ENCODE measurements at regions of chr9 and their contacts with region 1.

Region 1: DNA sequence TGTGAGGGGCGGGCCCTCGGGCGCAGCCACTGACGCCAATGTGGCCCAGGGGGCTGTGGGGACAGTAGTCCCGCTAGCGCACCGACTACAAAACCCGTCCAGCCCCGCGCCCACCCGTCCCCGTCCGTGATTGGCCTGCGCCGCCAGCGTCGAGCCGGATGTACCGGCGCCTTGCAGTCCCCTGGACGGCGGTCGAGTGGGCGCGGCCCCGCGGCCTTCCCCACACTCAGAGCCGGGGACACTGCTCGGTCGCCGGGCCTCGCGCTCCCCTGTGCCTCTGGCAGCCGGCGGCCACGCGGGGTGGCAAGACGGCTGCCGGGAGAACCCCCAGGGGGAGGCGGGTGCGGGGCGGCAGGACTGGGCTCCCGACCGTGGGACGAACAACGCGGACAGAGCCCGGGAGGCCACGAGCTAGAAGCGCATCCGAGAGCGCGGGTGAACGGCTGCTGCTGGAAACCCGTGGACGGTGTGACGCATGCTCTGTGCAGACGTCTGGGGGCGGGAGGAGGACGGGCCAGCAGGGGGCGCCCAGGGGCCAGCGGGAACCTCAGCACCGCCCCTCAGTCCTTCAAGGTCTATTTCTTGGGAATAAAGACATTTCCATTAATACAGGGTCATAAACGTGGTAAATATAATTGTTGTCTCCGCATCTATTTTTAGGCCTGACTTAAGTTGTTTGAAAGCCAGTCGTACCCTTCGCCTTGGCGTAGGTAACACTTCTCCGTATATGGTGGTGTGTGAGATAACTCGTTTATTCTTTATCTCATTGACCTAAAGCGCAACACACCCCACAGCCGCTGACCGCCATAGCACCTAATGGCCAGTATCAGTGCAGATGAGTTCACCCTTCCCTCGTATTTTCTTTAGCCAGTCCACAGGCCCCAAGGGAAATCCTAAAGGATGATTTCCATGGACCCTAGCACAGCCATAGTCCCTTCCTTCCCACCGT is 629 bp upstream of the BICD2 start:
- DNase-seq: peak; percentile 88 to 99 (median 97)
- ATAC-seq: peak; percentile 89
- H3K4me3 ChIP-seq: peak overlapping the region; percentile 95
- H3K4me3 Mint-ChIP-seq: peak overlapping the region; percentile 95
- H3K27ac ChIP-seq: peak overlapping the region; percentile 97
- H3K27ac Mint-ChIP-seq: peak overlapping the region; percentile 100
- H3K4me1 ChIP-seq: peaks cover 51% of the 10 kb centered on the region
- H3K4me1 Mint-ChIP-seq: peaks cover 62% of the 10 kb centered on the region
- H3K27me3 ChIP-seq: no peaks in the 10 kb centered on the region
- H3K27me3 Mint-ChIP-seq: no peaks in the 10 kb centered on the region
- CTCF ChIP-seq: peak; percentile 97

Region 2: GRCh38 chr9:92115071-92115858 is 650.0 kb before region 1 on chr9 and contains the start of gene SPTLC1:
- CTCF ChIA-PET with region 1: no interaction called
- POLR2A ChIA-PET with region 1: no interaction called
- intact Hi-C with region 1: loop called (anchors 1 to 10 kb)
- DNase-seq: peak; percentile 90 to 98 (median 92)
- ATAC-seq: peak; percentile 94
- H3K4me3 ChIP-seq: peak within 1 kb of the TSS; percentile 71
- H3K4me3 Mint-ChIP-seq: peak within 1 kb of the TSS; percentile 94
- H3K27ac ChIP-seq: peak within 1 kb of the TSS; percentile 84 to 89
- H3K27ac Mint-ChIP-seq: peak within 1 kb of the TSS; percentile 97
- H3K4me1 ChIP-seq: peaks cover 9% of the 10 kb centered on the region
- H3K4me1 Mint-ChIP-seq: peaks cover 47% of the 10 kb centered on the region
- H3K27me3 ChIP-seq: no peaks in the 10 kb centered on the region
- H3K27me3 Mint-ChIP-seq: no peaks in the 10 kb centered on the region
- CTCF ChIP-seq: no peak
- total RNA-seq, gene SPTLC1: 40.9 to 43.0 TPM

Region 3: DNA sequence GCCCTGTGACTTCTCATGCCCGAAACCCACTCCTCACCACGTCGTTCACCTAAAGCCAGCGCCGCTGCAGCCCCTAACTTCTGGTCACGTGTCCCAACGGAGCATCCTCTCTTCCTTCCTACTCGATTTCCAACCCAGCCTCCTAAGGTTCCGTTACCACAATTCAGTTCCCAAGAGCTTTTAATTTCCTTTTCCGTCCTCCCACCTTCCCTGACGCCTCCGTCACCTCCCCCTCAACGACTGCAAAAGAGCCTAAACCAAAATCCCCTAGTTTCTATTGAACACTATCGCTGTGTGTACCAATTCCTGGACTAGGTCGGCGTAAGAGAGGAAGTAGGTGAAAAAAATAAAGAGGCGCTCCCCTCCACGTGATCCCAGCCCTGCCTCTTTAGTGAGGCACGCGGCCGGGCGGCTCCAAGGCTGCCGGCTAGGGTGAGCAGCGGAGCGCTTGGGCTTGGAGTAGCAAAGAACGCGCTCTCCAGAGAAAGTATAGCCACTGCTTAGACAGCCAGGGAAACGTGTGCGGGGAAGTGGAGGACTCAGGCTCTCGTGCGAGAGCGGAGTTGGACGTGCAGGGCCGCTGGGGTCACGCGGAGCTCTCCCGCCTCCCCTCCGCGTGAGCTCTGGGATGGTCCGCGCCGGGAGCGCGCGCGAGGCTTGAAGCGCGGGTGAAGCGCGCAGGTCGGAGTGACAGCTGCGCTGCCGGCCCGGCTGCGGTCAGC is 439.8 kb before region 1 on chr9 and contains the starts of genes CENPP and NOL8:
- CTCF ChIA-PET with region 1: no interaction called
- POLR2A ChIA-PET with region 1: interaction called, 4 read pairs
- intact Hi-C with region 1: loop called in 1 of 2 experiments (anchors 5 kb)
- DNase-seq: peak; percentile 68 to 93 (median 76)
- ATAC-seq: peak; percentile 94
- H3K4me3 ChIP-seq: peak within 1 kb of the TSS; percentile 69
- H3K4me3 Mint-ChIP-seq: peak within 1 kb of the TSS; percentile 96
- H3K27ac ChIP-seq: peak within 1 kb of the TSS; percentile 94 to 97
- H3K27ac Mint-ChIP-seq: peak within 1 kb of the TSS; percentile 94
- H3K4me1 ChIP-seq: peaks cover 13% of the 10 kb centered on the region
- H3K4me1 Mint-ChIP-seq: peaks cover 40% of the 10 kb centered on the region
- H3K27me3 ChIP-seq: no peaks in the 10 kb centered on the region
- H3K27me3 Mint-ChIP-seq: no peaks in the 10 kb centered on the region
- CTCF ChIP-seq: no peak
- total RNA-seq, gene CENPP: 4.8 TPM
- total RNA-seq, gene NOL8: 55.9 to 65.7 TPM

Region 4: GRCh38 chr9:92716557-92716956 is 48.7 kb before region 1 on chr9:
- CTCF ChIA-PET with region 1: no interaction called
- POLR2A ChIA-PET with region 1: interaction called, 3 read pairs
- intact Hi-C with region 1: loop called in 1 of 2 experiments (anchors 2 kb)
- DNase-seq: peak; percentile 70 to 90 (median 82)
- ATAC-seq: peak; percentile 83
- H3K4me3 ChIP-seq: no peak overlapping the region
- H3K4me3 Mint-ChIP-seq: no peak overlapping the region
- H3K27ac ChIP-seq: no peak overlapping the region
- H3K27ac Mint-ChIP-seq: no peak overlapping the region
- H3K4me1 ChIP-seq: peaks cover 18% of the 10 kb centered on the region
- H3K4me1 Mint-ChIP-seq: peaks cover 17% of the 10 kb centered on the region
- H3K27me3 ChIP-seq: no peaks in the 10 kb centered on the region
- H3K27me3 Mint-ChIP-seq: no peaks in the 10 kb centered on the region
- CTCF ChIP-seq: peak; percentile 94

Region 5: DNA sequence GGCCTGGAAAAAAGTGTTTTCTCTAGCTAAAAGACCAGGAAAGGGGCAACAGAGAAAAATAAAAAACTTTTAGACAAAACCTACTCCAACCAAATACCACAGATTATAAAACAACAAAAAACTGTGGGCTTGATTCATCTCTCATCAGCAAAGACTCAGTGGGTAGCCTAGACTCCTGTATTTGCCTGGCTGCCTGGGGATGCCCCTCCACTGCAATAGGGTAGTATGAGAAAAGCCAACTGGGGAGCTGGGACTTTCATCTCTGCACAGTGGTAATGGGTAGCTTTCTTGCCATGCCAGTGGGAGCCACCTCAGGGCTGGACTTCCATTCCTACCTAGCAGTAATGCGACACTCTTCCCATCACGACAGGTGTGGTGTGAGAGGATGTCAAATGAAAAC is 105.0 kb after region 1 on chr9:
- CTCF ChIA-PET with region 1: no interaction called
- POLR2A ChIA-PET with region 1: no interaction called
- intact Hi-C with region 1: loop called in 1 of 2 experiments (anchors 5 kb)
- DNase-seq: no peak
- ATAC-seq: no peak
- H3K4me3 ChIP-seq: no peak overlapping the region
- H3K4me3 Mint-ChIP-seq: no peak overlapping the region
- H3K27ac ChIP-seq: no peak overlapping the region
- H3K27ac Mint-ChIP-seq: no peak overlapping the region
- H3K4me1 ChIP-seq: peaks cover 5% of the 10 kb centered on the region
- H3K4me1 Mint-ChIP-seq: peaks cover 69% of the 10 kb centered on the region
- H3K27me3 ChIP-seq: no peaks in the 10 kb centered on the region
- H3K27me3 Mint-ChIP-seq: no peaks in the 10 kb centered on the region
- CTCF ChIP-seq: no peak

Region 6: DNA sequence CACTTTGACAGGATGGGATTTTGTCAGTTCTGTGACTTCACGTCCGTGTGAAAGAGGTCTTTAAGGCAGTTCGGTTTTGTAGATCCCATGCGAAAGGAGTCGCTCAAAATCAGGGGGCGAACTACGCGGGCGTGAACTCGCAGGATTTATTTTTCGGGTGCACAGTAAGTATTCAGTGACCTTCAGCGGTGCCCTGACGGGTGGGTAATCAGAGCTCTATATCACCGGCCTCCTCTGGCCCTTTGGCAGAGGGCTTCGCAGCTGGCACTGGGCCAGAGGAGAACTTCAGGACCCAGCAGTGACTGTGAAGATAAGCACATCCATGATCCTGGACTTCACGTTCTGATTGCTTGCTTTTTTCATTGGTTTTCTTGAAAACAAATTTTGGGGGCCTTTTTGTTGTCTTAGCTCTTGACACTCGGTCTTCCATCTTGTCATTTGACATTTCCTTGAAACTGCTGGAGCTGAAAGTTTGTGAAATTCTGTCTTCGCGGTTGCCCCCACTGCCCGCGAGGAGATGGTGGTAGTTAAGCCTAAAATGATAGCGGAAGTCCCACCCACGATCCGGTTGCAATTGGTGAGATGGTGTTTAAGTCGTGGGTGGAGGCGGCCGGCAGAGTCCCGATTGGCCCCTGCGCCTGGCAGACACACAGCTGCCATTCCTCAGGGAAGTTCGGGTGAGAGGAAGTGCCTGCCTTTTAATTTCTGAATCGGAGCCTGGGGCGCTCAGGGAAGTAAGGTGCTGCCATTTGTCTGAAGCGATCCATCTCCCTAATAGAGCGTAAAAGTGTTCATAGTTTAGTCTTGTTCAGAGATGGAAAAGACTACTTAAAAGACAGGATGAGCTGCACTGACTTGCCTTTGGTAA is 688.0 kb after region 1 on chr9 and contains the start of gene FAM120AOS:
- CTCF ChIA-PET with region 1: no interaction called
- POLR2A ChIA-PET with region 1: no interaction called
- intact Hi-C with region 1: loop called in 1 of 2 experiments (anchors 2 kb)
- DNase-seq: peak; percentile 65 to 93 (median 76)
- ATAC-seq: peak; percentile 71
- H3K4me3 ChIP-seq: peak within 1 kb of the TSS; percentile 90
- H3K4me3 Mint-ChIP-seq: peak within 1 kb of the TSS; percentile 98
- H3K27ac ChIP-seq: peak within 1 kb of the TSS; percentile 67 to 81
- H3K27ac Mint-ChIP-seq: peak within 1 kb of the TSS; percentile 94
- H3K4me1 ChIP-seq: peaks cover 29% of the 10 kb centered on the region
- H3K4me1 Mint-ChIP-seq: peaks cover 64% of the 10 kb centered on the region
- H3K27me3 ChIP-seq: no peaks in the 10 kb centered on the region
- H3K27me3 Mint-ChIP-seq: no peaks in the 10 kb centered on the region
- CTCF ChIP-seq: no peak
- total RNA-seq, gene FAM120AOS: 45.6 to 50.3 TPM

Region 7: DNA sequence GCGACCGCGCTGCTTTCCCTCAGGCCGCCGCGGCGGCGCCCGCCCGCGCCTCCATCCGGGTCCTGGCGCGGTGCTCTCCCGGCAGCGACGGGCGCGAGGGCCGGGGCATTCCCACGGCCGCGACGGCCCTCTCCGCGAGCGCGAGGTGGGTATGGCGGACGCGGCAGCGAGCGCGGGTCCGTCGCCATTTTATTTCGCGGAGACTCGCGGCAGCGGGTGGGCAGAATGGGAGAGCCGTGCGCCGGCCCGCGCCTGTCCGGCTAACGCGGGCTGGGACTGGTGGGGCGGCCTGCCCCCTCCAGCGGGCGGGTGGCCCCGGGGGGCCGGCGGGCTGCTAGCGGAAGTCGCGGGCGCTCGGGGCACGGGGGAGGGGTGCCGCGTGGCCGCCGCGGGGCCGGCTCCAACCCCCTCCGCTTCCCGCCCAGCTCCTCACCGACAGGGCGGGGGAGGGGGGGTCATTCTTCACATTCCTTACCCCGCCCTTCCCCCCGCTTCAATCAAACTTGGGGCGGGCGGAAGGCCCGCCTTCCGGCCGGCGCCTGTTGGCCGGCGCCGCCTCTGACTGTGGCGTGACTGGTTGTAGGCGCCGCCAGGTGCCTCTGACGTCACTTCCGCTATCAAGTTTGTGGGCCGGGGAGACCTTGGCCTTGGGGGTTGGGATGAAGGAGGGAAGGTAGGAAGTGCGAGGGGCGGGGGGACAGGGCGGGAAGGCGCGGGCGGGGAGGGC is 1401.1 kb after region 1 on chr9:
- CTCF ChIA-PET with region 1: no interaction called
- POLR2A ChIA-PET with region 1: no interaction called
- intact Hi-C with region 1: loop called in 1 of 2 experiments (anchors 5 kb)
- DNase-seq: peak; percentile 86 to 98 (median 92)
- ATAC-seq: peak; percentile 60
- H3K4me3 ChIP-seq: peak overlapping the region; percentile 94
- H3K4me3 Mint-ChIP-seq: peak overlapping the region; percentile 100
- H3K27ac ChIP-seq: peak overlapping the region; percentile 86 to 95
- H3K27ac Mint-ChIP-seq: peak overlapping the region; percentile 98
- H3K4me1 ChIP-seq: peaks cover 21% of the 10 kb centered on the region
- H3K4me1 Mint-ChIP-seq: peaks cover 64% of the 10 kb centered on the region
- H3K27me3 ChIP-seq: no peaks in the 10 kb centered on the region
- H3K27me3 Mint-ChIP-seq: no peaks in the 10 kb centered on the region
- CTCF ChIP-seq: no peak